Panc1 (cell line): ENCODE measurements at regions of chr10 and their contacts with region 1.

Region 1: GRCh38 chr10:32190890-32191491 is 134.8 kb upstream of the KIF5B start:
- DNase-seq: no peak
- ATAC-seq: no peak; the same call in 1 of the 2 replicates
- H3K4me3 ChIP-seq: no peak overlapping the region
- H3K27ac ChIP-seq: no peak overlapping the region
- H3K4me1 ChIP-seq: no peaks in the 10 kb centered on the region
- H3K27me3 ChIP-seq: no peaks in the 10 kb centered on the region
- CTCF ChIP-seq: peak; percentile 63; the same call in 1 of the 2 replicates

Region 2: GRCh38 chr10:32210306-32211045 is 19.5 kb after region 1 on chr10:
- CTCF ChIA-PET with region 1: no interaction called
- POLR2A ChIA-PET with region 1: no interaction called
- in situ Hi-C with region 1: no loop called
- intact Hi-C with region 1: no loop called
- DNase-seq: no peak
- ATAC-seq: peak; percentile 75
- H3K4me3 ChIP-seq: no peak overlapping the region
- H3K27ac ChIP-seq: no peak overlapping the region
- H3K4me1 ChIP-seq: no peaks in the 10 kb centered on the region; the same call in 1 of the 2 replicates
- H3K27me3 ChIP-seq: no peaks in the 10 kb centered on the region
- CTCF ChIP-seq: peak; percentile 80

Region 3: GRCh38 chr10:32367793-32368453 is 176.9 kb after region 1 on chr10:
- CTCF ChIA-PET with region 1: no interaction called
- POLR2A ChIA-PET with region 1: no interaction called
- in situ Hi-C with region 1: no loop called
- intact Hi-C with region 1: loop called (anchors 10 kb)
- DNase-seq: peak; percentile 56
- ATAC-seq: peak; percentile 66; the same call in 1 of the 2 replicates
- H3K4me3 ChIP-seq: no peak overlapping the region; a peak in 1 of 4 replicates
- H3K27ac ChIP-seq: no peak overlapping the region; the same call in 1 of the 2 replicates
- H3K4me1 ChIP-seq: no peaks in the 10 kb centered on the region; the same call in 1 of the 2 replicates
- H3K27me3 ChIP-seq: no peaks in the 10 kb centered on the region
- CTCF ChIP-seq: peak; percentile 75